Upper lobe of right lung (tissue), 1 donor: ENCODE measurements at regions of chr9 and their contacts with region 1.

Region 1: DNA sequence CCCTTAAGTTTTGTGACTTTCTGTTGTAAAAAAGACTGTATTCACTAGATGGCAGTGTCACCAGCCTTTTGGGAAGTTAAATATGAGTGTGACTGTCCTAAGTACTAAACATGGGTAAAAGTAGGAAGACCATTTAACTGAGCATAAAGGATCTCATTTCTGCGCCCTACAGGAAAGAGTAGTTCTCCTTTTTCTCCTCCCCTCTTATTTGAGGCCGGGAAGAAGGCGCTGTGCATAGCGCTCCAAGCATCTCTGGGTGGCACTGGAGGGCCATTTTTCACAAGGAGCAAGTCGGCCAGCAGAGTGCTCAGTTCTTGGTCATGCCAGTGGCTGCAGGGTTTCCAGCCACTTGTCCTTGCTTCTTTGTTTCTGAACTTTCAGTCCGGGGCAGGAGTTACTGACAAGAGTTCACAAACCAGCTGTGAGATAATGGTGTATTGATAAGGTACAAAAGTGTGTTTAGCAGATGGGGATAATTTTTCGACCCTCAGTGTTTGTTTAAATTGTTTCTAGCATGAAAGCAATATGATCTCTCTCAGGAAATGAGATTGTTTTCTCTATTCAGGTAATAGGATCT is 227.6 kb upstream of the DMRT1 start:
- DNase-seq: peak; percentile 78
- ATAC-seq: peak; percentile 93
- H3K4me3 ChIP-seq: no peak overlapping the region
- H3K27ac ChIP-seq: no peak overlapping the region
- H3K4me1 ChIP-seq: peaks cover 8% of the 10 kb centered on the region
- H3K27me3 ChIP-seq: no peaks in the 10 kb centered on the region
- CTCF ChIP-seq: peak; percentile 84

Region 2: DNA sequence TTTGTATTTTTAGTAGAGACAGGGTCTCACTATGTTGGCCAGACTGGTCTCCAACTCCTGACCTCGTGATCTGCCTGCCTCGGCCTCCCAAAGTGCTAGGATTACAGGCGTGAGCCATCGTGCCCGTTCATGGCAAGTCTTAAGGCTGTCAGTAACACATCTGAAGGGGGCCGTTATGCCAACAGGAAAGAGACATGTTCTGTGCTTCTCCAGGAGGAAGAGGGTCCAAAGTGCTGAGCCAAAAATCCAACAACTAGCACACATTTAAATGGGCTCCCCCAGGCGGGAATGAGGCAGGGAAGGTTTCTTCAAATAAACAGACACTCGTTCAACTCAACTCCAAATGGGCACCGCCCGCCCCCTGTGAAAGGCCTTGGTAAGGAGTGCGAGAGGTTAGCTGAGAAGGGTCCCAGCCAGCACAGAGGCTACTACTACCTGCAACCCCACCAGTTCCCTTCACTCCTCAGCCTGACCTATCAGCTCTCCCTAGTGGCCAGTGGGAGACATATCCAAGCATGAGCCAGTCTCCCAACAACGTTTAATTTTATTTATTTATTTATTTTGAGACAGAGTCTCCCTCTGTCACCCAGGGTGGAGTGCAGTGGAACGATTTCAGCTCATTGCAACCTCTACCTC is 143.5 kb after region 1 on chr9:
- intact Hi-C with region 1: loop called (anchors 5 kb)
- DNase-seq: no peak
- ATAC-seq: peak; percentile 74
- H3K4me3 ChIP-seq: no peak overlapping the region
- H3K27ac ChIP-seq: no peak overlapping the region
- H3K4me1 ChIP-seq: peaks cover 10% of the 10 kb centered on the region
- H3K27me3 ChIP-seq: no peaks in the 10 kb centered on the region
- CTCF ChIP-seq: peak; percentile 61

Region 3: GRCh38 chr9:806285-807156 is 192.7 kb after region 1 on chr9:
- intact Hi-C with region 1: loop called (anchors 5 kb)
- DNase-seq: no peak
- ATAC-seq: peak; percentile 55
- H3K4me3 ChIP-seq: no peak overlapping the region
- H3K27ac ChIP-seq: no peak overlapping the region
- H3K4me1 ChIP-seq: no peaks in the 10 kb centered on the region
- H3K27me3 ChIP-seq: no peaks in the 10 kb centered on the region
- CTCF ChIP-seq: peak; percentile 77